Sigmoid colon (tissue), 7 donors: ENCODE measurements at regions of chr15 and their contacts with region 1.

Region 1: DNA sequence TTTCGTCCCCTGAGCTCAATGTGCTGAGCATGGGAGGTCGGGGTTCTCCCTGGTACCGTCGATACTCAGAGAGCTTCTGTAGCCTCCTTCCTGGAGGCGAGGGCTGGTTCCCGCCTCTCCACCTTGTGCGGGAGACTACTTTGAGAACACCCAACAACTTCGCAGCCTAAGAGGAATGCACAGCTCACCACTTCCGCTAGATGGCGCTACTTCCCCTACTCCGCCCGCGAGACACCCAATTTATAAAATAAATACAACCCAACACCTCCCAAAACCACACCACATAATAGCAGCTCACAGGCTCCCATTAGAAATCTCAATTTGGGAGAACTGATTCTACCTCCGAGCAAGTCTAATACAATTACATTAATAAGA is 1.2 kb downstream of the RGMA start:
- DNase-seq: peak; percentile 92
- H3K4me3 ChIP-seq: peak overlapping the region; percentile 54 to 87 (median 72)
- H3K27ac ChIP-seq: peak overlapping the region; percentile 85 to 96 (median 90)
- H3K4me1 ChIP-seq: peaks cover 0 to 58% (median 37%) of the 10 kb centered on the region in 4 donors
- H3K27me3 ChIP-seq: peaks cover 0 to 5% (median 0%) of the 10 kb centered on the region in 3 donors
- CTCF ChIP-seq: peak; percentile 83 to 90 (median 89)
- EP300 ChIP-seq: no peak
- POLR2A ChIP-seq: no peak

Region 2: GRCh38 chr15:93141371-93141794 is 53.6 kb after region 1 on chr15:
- intact Hi-C with region 1: loop called (anchors 5 kb)
- DNase-seq: no peak
- H3K4me3 ChIP-seq: no peak overlapping the region
- H3K27ac ChIP-seq: no peak overlapping the region
- H3K4me1 ChIP-seq: peaks cover 0 to 20% (median 16%) of the 10 kb centered on the region in 4 donors
- H3K27me3 ChIP-seq: no peaks in the 10 kb centered on the region
- CTCF ChIP-seq: no peak
- EP300 ChIP-seq: no peak
- POLR2A ChIP-seq: no peak

Region 3: GRCh38 chr15:93302080-93302765 is 214.4 kb after region 1 on chr15:
- intact Hi-C with region 1: loop called (anchors 5 kb)
- DNase-seq: no peak
- H3K4me3 ChIP-seq: no peak overlapping the region
- H3K27ac ChIP-seq: no peak overlapping the region
- H3K4me1 ChIP-seq: peaks cover 0 to 17% (median 4%) of the 10 kb centered on the region in 4 donors
- H3K27me3 ChIP-seq: no peaks in the 10 kb centered on the region
- CTCF ChIP-seq: no peak
- EP300 ChIP-seq: no peak
- POLR2A ChIP-seq: no peak

Region 4: DNA sequence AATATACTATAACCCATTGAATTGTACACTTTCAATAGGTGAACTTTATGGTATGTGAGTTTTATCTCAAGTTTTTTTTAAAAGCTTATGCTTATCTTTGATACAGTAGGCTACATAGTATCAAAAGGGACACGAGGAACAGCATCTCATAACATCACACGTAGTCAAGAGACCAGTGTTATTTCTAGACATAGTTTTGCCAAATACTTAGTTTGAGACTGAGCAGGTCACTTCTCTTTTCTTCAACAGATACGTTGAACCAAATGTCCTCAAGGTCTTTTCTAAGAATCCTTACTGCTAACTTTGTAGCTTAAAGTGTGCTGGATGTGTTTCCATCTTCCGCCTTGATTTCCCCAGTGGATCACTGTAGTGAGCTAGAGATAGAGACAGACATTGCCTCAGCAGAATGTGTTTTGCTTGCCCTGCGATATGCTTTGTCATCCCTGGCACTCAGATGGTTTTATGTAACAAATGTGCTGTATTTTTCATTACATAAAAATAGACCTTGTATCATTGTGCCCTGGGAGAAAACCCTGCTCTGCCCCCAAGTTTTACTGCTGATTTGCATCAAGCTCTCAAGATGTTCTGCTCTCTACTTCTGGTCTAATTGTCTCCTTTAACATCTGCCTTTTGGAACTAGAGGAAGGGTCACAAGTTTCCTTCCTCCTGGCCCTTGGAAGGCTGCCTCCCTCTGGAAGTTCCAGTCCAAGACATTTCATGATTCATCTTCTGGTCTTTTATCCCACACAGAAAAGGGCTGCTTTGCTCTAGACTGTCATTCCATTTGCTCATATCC is 427.6 kb after region 1 on chr15:
- intact Hi-C with region 1: loop called (anchors 5 kb)
- DNase-seq: peak; percentile 79
- H3K4me3 ChIP-seq: no peak overlapping the region
- H3K27ac ChIP-seq: peak overlapping the region in 3 of 4 donors; percentile 41 to 53 (median 42)
- H3K4me1 ChIP-seq: peaks cover 0 to 34% (median 29%) of the 10 kb centered on the region in 4 donors
- H3K27me3 ChIP-seq: no peaks in the 10 kb centered on the region
- CTCF ChIP-seq: no peak
- EP300 ChIP-seq: no peak
- POLR2A ChIP-seq: no peak

Region 5: DNA sequence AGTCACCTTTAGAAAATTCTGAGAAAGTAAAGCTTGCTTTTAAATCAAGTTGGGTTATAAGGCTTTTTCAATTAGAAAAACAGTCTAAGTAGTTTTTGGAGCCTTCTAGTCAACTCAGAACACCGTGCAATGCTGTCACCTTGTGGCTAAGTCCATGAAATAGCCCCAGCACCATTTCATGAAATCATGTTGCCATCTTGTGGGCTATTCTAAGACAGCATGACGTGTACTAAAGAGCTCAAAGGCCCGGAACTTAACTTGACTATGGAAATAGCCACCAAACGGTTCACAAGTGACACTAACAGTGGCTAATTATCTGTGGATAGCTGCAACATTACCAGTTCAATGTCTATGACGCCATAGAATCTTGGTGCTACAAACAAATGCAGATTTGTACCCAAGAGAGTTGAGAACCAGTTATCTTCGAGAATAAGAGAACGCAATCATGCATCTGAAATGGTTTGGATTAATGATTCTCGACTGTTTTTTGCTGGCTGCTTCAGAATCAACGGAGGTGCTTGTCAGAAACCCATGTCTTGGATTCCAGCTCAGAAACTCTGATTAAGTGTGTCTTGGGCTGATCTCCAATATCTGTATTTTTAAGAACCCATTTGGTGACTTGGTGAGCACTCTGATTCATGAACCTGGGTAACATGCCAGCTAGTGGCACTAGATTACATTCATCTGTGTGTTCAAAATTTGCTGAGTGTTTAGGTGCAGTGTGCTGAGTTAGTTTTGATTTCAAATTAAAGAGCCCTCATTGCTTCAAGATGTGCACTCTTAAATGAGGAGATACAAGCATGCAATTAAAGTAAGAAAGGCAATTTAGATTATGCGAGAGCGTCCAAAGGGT is 1032.3 kb after region 1 on chr15:
- intact Hi-C with region 1: loop called (anchors 2 kb)
- DNase-seq: peak; percentile 88
- H3K4me3 ChIP-seq: no peak overlapping the region
- H3K27ac ChIP-seq: peak overlapping the region; percentile 69 to 80 (median 75)
- H3K4me1 ChIP-seq: peaks cover 0 to 34% (median 13%) of the 10 kb centered on the region in 4 donors
- H3K27me3 ChIP-seq: no peaks in the 10 kb centered on the region
- CTCF ChIP-seq: peak; percentile 94 to 99 (median 99)
- EP300 ChIP-seq: no peak
- POLR2A ChIP-seq: no peak